ENCODE measurements at regions of chr11 and their contacts with region 1.

Region 1: GRCh38 chr11:77479746-77480352 is 6.0 kb upstream of the PAK1 start:
- DNase-seq: no peak
- H3K4me3 ChIP-seq: no peak overlapping the region
- CTCF ChIP-seq: no peak

Region 2: GRCh38 chr11:77424644-77425043 is 55.2 kb before region 1 on chr11:
- in situ Hi-C with region 1: no loop called
- DNase-seq: no peak
- H3K4me3 ChIP-seq: no peak overlapping the region
- CTCF ChIP-seq: no peak

Region 3: DNA sequence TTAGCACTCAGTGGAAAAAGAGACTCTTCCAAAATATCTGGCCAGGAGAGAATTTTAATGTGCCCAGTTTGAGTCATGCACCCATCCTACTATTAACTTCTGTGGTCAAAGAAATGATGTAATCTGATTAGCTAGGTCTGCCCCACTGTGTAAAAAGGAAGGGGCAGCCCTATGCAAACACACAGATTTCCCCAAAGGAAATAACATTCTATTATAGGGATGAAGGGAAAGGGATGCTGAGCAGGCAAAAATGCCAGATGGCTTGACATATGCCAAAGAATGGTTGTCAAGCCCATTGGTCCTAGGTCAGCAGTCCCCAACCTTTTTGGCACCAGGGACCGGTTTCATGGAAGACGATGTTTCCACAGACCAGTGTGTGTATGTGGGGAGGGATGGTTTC is 37.4 kb after region 1 on chr11:
- in situ Hi-C with region 1: loop called (anchors 5 kb)
- DNase-seq: no peak
- H3K4me3 ChIP-seq: no peak overlapping the region
- CTCF ChIP-seq: no peak